ENCODE measurements at regions of chr1 and their contacts with region 1.

Region 1: GRCh38 chr1:12087797-12088314 is 24.8 kb downstream of the TNFRSF8 start:
- DNase-seq: peak; percentile 76
- ATAC-seq: peak; percentile 91
- H3K4me3 ChIP-seq: no peak overlapping the region
- H3K27ac ChIP-seq: peak overlapping the region; percentile 67
- H3K4me1 ChIP-seq: peaks cover 22% of the 10 kb centered on the region
- H3K27me3 ChIP-seq: no peaks in the 10 kb centered on the region
- CTCF ChIP-seq: no peak
- EP300 ChIP-seq: peak; percentile 10 to 56; a peak in 1 of 4 replicates
- POLR2A ChIP-seq: no peak
- RAD21 ChIP-seq: no peak

Region 2: GRCh38 chr1:12046749-12047119 is 41.1 kb before region 1 on chr1:
- CTCF ChIA-PET with region 1: interaction called, 15 read pairs
- POLR2A ChIA-PET with region 1: interaction called, 8 read pairs
- RAD21 ChIA-PET with region 1: interaction called, 11 read pairs
- SMC1A ChIA-PET with region 1: interaction called, 4 read pairs
- in situ Hi-C with region 1: no loop called
- intact Hi-C with region 1: no loop called
- DNase-seq: no peak
- ATAC-seq: no peak; the same call in 1 of the 3 replicates
- H3K4me3 ChIP-seq: no peak overlapping the region
- H3K27ac ChIP-seq: peak overlapping the region; percentile 94
- H3K4me1 ChIP-seq: peaks cover 75% of the 10 kb centered on the region
- H3K27me3 ChIP-seq: no peaks in the 10 kb centered on the region
- CTCF ChIP-seq: no peak
- EP300 ChIP-seq: no peak
- POLR2A ChIP-seq: no peak
- RAD21 ChIP-seq: no peak

Region 3: DNA sequence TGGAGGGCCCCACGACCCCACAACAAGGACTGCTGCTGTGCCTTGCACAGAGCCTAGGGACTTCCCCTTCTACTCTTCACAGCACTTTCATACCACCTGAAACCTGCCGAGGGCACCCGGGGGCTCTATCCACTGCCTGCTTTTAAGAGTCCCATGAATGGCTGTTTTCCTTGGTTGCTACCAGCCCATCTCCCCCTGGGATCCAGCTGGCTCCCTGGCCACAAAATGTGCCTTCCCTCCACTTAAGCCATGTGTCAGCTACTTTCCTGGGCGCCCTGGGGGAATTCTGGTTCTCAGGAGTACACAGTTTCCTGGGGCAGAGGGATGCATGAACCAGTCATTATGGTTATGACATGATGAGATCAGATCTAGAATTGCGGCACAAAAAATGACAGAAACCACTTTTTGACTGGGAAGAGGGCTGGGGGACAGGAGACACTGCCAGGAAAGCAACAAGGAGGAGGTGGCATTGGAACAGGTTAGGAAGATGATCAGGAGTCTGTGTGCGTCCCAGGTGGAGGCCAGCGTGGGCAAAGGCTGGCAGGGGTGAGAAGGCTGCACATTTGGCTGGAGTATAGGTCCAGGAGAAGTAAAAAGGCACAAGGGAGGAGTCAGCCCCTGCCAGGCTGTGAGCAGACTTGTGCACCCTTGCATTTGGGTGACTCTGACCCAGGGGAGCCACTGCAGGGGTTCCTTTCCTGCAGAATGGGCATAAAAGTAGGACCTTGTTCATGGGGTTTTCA is 28.0 kb before region 1 on chr1:
- CTCF ChIA-PET with region 1: no interaction called
- POLR2A ChIA-PET with region 1: interaction called, 17 read pairs
- RAD21 ChIA-PET with region 1: interaction called, 4 read pairs
- SMC1A ChIA-PET with region 1: interaction called, 3 read pairs
- in situ Hi-C with region 1: no loop called
- intact Hi-C with region 1: no loop called
- DNase-seq: no peak
- ATAC-seq: peak; percentile 64
- H3K4me3 ChIP-seq: peak overlapping the region; percentile 36; the same call in 1 of the 2 replicates
- H3K27ac ChIP-seq: peak overlapping the region; percentile 62
- H3K4me1 ChIP-seq: peaks cover 56% of the 10 kb centered on the region
- H3K27me3 ChIP-seq: no peaks in the 10 kb centered on the region
- CTCF ChIP-seq: 0 out of 6 replicates have a peak, but pooled peaks of 1 of the 3 experiments have one; percentile 0
- EP300 ChIP-seq: no peak
- POLR2A ChIP-seq: no peak
- RAD21 ChIP-seq: no peak

Region 4: DNA sequence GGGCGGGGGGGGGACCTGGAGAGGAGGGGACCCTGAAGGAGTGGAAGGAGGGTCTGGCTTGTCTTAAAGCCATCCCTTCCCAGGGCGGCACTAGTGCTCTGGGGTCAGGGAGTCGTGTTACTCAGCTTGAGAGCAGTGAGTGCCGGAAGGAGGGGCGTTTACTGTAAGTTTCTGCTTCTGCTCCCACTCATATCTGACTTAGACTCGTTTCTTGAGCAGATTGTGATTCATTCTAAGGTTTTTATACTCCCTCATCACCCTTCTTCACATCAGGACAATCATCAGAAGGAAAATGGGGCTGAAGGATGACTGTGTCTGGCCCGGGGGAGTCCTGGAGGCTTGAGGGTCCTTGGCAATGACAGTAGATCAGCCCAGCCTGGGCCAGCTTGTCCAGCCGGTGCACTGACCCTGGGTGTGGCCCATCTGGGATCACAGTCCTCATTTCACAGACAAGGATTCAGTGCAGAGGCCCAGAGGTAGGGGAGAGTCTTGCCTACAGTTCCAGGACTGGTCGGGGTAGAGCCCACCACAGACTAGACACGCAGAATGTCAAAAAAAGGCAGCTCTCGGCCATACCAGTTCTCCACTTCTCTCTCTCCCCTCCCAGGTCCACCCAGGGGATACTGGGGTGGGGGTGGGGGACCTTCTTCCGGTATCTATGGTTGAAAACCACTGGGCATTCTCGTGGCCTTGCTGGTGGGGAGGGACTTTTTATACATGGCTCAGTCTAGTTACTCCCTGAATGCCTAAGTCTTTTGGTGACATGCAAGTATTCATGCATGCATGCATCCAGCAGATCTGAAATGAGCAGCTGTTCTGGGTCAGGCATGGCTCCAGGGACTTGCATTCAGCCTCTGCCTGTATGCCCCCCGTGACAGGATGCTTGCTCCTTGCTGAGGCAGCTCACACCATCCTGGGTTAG is 19.7 kb before region 1 on chr1:
- CTCF ChIA-PET with region 1: interaction called, 10 read pairs
- POLR2A ChIA-PET with region 1: interaction called, 17 read pairs
- RAD21 ChIA-PET with region 1: interaction called, 13 read pairs
- SMC1A ChIA-PET with region 1: interaction called, 5 read pairs
- in situ Hi-C with region 1: no loop called
- intact Hi-C with region 1: no loop called
- DNase-seq: peak; percentile 91
- ATAC-seq: peak; percentile 56
- H3K4me3 ChIP-seq: peak overlapping the region; percentile 86
- H3K27ac ChIP-seq: peak overlapping the region; percentile 91
- H3K4me1 ChIP-seq: peaks cover 39% of the 10 kb centered on the region
- H3K27me3 ChIP-seq: no peaks in the 10 kb centered on the region
- CTCF ChIP-seq: no peak
- EP300 ChIP-seq: peak; percentile 45 to 83; a peak in 3 of 4 replicates
- POLR2A ChIP-seq: peak; percentile 67
- RAD21 ChIP-seq: no peak

Region 5: GRCh38 chr1:12204140-12204539 is 116.3 kb after region 1 on chr1:
- CTCF ChIA-PET with region 1: no interaction called
- POLR2A ChIA-PET with region 1: no interaction called
- RAD21 ChIA-PET with region 1: no interaction called
- SMC1A ChIA-PET with region 1: no interaction called
- in situ Hi-C with region 1: no loop called
- intact Hi-C with region 1: no loop called
- DNase-seq: no peak
- ATAC-seq: peak; percentile 20
- H3K4me3 ChIP-seq: no peak overlapping the region
- H3K27ac ChIP-seq: peak overlapping the region; percentile 41
- H3K4me1 ChIP-seq: peaks cover 46% of the 10 kb centered on the region
- H3K27me3 ChIP-seq: no peaks in the 10 kb centered on the region
- CTCF ChIP-seq: no peak
- EP300 ChIP-seq: peak in 1 of 2 experiments; percentile 53; a peak in 1 of 4 replicates
- POLR2A ChIP-seq: peak; percentile 39; the same call in 1 of the 2 replicates
- RAD21 ChIP-seq: no peak

Region 6: GRCh38 chr1:12345350-12346217 is 257.7 kb after region 1 on chr1:
- CTCF ChIA-PET with region 1: no interaction called
- POLR2A ChIA-PET with region 1: no interaction called
- RAD21 ChIA-PET with region 1: no interaction called
- SMC1A ChIA-PET with region 1: no interaction called
- in situ Hi-C with region 1: no loop called
- intact Hi-C with region 1: no loop called
- DNase-seq: peak; percentile 5
- ATAC-seq: peak; percentile 54
- H3K4me3 ChIP-seq: peak overlapping the region; percentile 2; the same call in 1 of the 2 replicates
- H3K27ac ChIP-seq: peak overlapping the region; percentile 68
- H3K4me1 ChIP-seq: peaks cover 29% of the 10 kb centered on the region
- H3K27me3 ChIP-seq: no peaks in the 10 kb centered on the region
- CTCF ChIP-seq: no peak
- EP300 ChIP-seq: no peak
- POLR2A ChIP-seq: no peak
- RAD21 ChIP-seq: no peak

Measured in GM12878 (cell line).